ENCODE measurements at regions of chr6 and their contacts with region 1.

Region 1: GRCh38 chr6:42075159-42075838 is 25.0 kb downstream of the TAF8 start:
- DNase-seq: peak; percentile 37
- H3K4me3 ChIP-seq: no peak overlapping the region
- H3K27ac ChIP-seq: no peak overlapping the region
- H3K27me3 ChIP-seq: no peaks in the 10 kb centered on the region
- CTCF ChIP-seq: peak; percentile 94

Region 2: DNA sequence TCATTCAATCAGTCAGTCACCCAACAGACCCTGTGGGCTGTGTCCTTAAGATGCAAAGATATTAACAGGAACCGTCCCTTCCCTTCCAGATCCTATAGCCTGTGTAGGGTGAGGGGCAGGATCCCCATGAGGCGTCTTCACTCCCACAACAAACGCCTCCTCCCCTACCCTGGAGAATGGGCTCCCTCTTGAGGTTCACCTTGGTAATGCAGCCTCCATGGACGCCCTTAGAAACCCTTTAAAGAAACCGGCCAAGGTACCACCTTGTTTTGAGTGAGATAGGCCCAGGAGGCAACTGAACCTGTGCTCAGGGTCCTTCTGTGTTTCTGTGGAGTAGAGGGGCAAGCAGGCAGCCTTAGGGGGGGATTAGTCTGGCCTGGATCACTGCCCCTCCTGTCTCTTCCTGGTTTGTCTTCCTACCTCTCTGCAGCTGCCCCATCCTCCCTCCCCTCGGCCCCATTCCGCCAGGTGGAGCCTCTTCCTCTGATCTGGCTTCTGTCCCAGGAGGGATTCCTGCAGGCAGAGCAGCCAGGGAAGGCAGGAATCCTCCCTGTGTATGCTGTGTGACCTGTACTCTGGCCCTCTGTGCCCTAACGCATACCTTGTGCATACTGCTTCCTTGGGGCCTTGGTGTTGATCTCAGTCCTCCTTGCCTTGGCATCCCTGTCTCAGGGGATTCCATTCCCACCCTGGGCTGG is 91.3 kb after region 1 on chr6:
- CTCF ChIA-PET with region 1: interaction called, 24 read pairs
- POLR2A ChIA-PET with region 1: interaction called, 3 read pairs
- DNase-seq: peak; percentile 44
- H3K4me3 ChIP-seq: no peak overlapping the region
- H3K27ac ChIP-seq: no peak overlapping the region
- H3K27me3 ChIP-seq: peaks cover 3% of the 10 kb centered on the region
- CTCF ChIP-seq: peak; percentile 98

Region 3: GRCh38 chr6:42453031-42453653 is 377.8 kb after region 1 on chr6:
- CTCF ChIA-PET with region 1: no interaction called
- POLR2A ChIA-PET with region 1: no interaction called
- DNase-seq: peak; percentile 78
- H3K4me3 ChIP-seq: peak overlapping the region; percentile 88
- H3K27ac ChIP-seq: peak overlapping the region; percentile 86
- H3K27me3 ChIP-seq: no peaks in the 10 kb centered on the region
- CTCF ChIP-seq: no peak